ENCODE measurements at regions of chr7 and their contacts with region 1.

Region 1: DNA sequence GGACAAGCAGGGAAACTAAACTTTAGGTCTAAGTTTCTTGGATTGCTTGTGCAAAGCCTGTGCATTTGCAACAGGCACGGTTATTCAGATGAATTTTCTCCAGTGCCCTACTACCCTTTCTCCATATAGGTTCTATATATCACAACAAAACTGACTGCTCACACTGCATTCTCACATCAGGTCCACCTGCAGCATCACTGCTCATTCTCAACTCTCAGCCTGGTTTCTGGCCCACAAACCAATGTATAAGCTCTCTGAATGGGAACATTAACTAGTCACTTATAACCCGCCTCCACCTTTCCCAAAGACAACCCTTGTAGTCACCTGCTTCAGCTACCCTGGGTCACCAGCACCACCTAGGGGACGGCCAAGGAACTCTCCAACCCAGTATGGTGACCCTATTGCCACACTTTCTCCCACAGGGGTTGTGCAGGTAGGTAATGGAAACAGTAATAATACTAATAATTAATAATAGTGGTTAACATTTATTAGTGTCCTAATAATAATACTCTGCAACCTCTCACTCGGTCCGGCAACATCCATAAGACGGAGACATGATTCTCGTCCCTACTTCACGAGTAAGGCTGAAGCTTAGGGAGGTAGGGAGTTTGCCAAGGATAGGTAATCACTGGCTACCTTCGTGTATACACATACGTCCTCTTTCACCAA is 97.3 kb downstream of the CLEC2L start:
- DNase-seq: peak in 1 of 10 donors; percentile 37
- H3K4me3 ChIP-seq: no peak overlapping the region
- H3K27ac ChIP-seq: peak overlapping the region in 6 of 59 donors; percentile 16 to 68 (median 29)
- H3K27me3 ChIP-seq: no peaks in the 10 kb centered on the region
- CTCF ChIP-seq: peak; percentile 23 to 78 (median 61)

Region 2: DNA sequence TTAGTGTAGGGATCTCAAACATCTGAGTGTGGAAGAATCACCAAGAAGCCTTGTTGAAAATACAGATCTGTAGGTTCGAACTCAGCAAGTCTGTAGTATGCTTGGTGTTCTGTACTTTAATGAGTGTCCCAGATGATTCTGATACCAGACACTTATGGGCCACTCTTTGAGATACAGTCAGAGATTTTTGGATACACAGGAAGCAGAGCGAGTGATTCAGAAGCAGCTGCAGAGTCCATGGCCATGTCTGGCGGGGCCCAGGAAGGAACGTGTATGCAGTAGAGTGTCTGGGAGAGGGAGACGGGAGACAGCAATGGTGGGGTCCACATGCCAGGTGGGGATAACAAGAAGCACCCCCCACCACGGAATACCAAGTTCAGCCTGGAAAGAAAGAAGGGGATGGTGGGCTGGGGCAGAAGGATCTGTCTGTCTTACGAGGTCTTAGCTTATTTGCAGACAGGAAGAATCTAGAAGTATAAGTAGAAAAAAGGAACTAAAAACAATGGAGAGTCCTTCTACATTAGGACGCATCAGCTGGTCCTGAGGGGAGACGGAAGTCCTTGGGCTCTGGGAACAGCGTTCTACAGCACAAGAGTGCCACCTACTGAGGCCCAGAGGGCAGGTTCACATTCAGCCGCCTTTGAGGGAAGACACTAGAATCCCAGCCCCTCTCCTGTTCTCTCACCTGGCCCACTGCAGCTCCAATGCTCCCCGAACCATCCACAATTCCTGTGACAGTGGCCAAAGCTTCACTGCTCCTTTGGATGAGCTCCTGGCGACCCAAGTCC is 722.1 kb after region 1 on chr7:
- intact Hi-C with region 1: loop called in 1 of 2 experiments (anchors 10 kb)
- DNase-seq: peak in 9 of 10 donors; percentile 38 to 66 (median 59)
- H3K4me3 ChIP-seq: no peak overlapping the region
- H3K27ac ChIP-seq: peak overlapping the region in 3 of 59 donors; percentile 12 to 31 (median 22)
- H3K27me3 ChIP-seq: no peaks in the 10 kb centered on the region
- CTCF ChIP-seq: peak; percentile 25 to 75 (median 63)